Activated CD4-positive, alpha-beta T cell treated with anti-CD3 and anti-CD28 coated beads, Interleukin-2, amount 10 ng/mL, durations not matched to agents 24 days and 14 days (primary cell): ENCODE measurements at regions of chr4 and their contacts with region 1.

Region 1: DNA sequence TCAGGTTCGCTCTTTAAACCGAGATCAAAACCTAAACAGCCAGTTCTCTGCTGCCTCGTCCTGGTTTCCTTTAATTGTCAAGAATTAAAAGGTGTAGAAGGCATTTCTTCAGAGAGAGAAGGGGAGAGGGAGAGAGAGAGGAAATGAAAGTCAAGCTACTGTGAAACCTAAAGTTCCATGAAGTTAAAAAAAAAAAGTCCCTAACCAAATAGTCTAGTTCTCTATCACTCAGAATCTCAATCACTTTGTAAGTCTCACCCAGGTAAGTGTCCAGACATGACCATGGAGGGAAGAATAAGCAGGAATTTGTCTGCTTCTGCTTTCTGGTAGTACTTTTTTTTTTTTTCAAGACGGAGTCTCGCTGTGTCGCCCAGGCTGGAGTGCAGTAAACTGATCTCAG is 18.8 kb upstream of the SMIM14 start:
- DNase-seq: no peak
- H3K4me3 Mint-ChIP-seq: no peak overlapping the region
- H3K27ac Mint-ChIP-seq: peak overlapping the region; percentile 20
- H3K4me1 Mint-ChIP-seq: peaks cover 10% of the 10 kb centered on the region
- H3K27me3 Mint-ChIP-seq: no peaks in the 10 kb centered on the region

Region 2: DNA sequence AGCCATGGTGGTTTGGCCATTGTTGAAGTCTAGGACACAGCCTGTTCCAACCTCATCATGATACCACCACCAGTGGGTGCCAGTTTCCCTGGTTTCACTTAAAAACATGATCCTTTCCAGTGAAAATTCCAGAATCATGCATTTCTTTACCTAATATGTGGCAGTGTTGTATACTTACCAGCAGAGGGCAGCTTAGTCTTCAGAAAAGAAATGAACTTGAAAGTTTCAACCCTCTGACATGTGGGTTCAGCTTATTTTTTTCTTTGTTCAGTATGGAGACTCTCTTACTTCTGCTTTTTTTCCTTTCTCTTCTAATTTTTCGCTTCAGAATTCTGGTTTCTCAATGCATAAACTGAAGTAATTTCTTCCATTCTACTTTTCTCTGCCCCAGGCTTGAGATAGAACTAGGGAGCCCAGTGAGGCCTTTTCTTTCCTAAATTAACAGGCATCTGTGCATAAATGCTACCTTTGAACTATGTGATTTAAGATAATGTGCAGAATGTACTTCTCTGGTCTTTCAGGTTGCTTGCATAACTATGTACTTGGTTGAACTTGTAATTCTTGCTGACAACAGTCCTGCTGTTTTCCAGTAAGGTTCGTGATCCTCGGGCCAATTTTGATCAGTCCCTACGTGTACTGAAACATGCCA is 187.9 kb before region 1 on chr4:
- intact Hi-C with region 1: loop called (anchors 5 kb)
- DNase-seq: peak; percentile 72
- H3K4me3 Mint-ChIP-seq: no peak overlapping the region
- H3K27ac Mint-ChIP-seq: peak overlapping the region; percentile 72
- H3K4me1 Mint-ChIP-seq: peaks cover 5% of the 10 kb centered on the region
- H3K27me3 Mint-ChIP-seq: no peaks in the 10 kb centered on the region